MCF 10A (cell line): ENCODE measurements at regions of chr10 and their contacts with region 1.

Region 1: DNA sequence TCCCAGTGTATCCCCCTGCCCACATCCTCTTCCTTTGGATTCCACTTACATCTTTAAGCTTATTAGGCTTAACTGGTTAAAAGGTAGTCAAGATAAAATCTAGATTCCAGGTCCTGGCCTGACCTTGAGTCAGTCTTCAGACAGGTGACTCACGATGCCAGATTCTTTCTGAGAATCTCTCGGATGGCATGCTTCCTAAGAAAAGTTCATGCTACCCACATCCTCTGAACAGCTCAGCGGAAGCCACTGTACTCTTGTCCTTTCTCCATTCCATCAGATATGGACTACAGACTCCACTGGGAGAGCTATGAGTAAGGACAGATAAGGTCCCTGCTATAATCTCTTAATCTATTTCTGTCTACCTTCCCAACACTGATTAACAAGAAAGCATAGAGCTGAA is 43.4 kb downstream of the DNMBP start:
- DNase-seq: peak; percentile 78
- H3K4me3 Mint-ChIP-seq: no peak overlapping the region
- H3K27ac Mint-ChIP-seq: peak overlapping the region; percentile 49
- H3K4me1 Mint-ChIP-seq: peaks cover 12% of the 10 kb centered on the region
- H3K27me3 Mint-ChIP-seq: no peaks in the 10 kb centered on the region
- CTCF ChIP-seq: no peak

Region 2: DNA sequence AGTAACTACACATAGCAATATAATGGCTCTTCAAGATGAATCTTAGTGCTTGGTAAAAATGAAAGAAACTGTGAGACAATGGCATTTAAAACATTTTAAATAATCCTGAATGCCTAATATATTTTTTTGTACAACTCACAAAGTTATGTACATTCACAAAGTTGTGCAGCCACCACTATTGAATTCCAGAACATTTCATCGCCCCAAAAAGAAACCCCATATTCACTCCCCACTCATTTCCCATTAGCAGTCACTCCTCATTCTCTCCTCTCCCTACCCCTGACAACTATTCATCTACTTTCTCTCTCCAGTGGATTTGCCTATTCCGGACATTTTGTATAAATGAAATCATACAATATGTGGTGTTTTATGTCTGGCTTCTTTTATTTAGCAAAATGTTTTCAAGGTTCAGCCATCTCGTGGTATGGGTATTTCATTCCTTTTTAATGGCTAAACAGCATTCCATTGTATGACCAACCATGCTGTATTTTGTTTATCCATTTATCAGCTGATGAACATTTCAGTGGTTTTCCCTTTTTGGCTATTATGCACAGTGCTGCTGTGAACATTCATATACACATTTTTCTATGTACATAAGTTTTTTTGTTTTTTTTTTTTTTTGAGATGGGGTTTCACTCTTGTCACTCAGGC is 272.2 kb before region 1 on chr10:
- CTCF ChIA-PET with region 1: no interaction called
- POLR2A ChIA-PET with region 1: no interaction called
- intact Hi-C with region 1: no loop called
- DNase-seq: no peak
- H3K4me3 Mint-ChIP-seq: no peak overlapping the region
- H3K27ac Mint-ChIP-seq: no peak overlapping the region
- H3K4me1 Mint-ChIP-seq: peaks cover 6% of the 10 kb centered on the region
- H3K27me3 Mint-ChIP-seq: no peaks in the 10 kb centered on the region
- CTCF ChIP-seq: no peak

Region 3: GRCh38 chr10:99906470-99906869 is 59.8 kb before region 1 on chr10:
- CTCF ChIA-PET with region 1: interaction called, 5 read pairs
- POLR2A ChIA-PET with region 1: no interaction called
- intact Hi-C with region 1: loop called (anchors 1 kb)
- DNase-seq: peak; percentile 96
- H3K4me3 Mint-ChIP-seq: no peak overlapping the region
- H3K27ac Mint-ChIP-seq: peak overlapping the region; percentile 80
- H3K4me1 Mint-ChIP-seq: peaks cover 14% of the 10 kb centered on the region
- H3K27me3 Mint-ChIP-seq: no peaks in the 10 kb centered on the region
- CTCF ChIP-seq: peak; percentile 38

Region 4: GRCh38 chr10:99945263-99945662 is 21.0 kb before region 1 on chr10:
- CTCF ChIA-PET with region 1: no interaction called
- POLR2A ChIA-PET with region 1: interaction called, 10 read pairs
- intact Hi-C with region 1: no loop called
- DNase-seq: peak; percentile 58
- H3K4me3 Mint-ChIP-seq: no peak overlapping the region
- H3K27ac Mint-ChIP-seq: peak overlapping the region; percentile 52
- H3K4me1 Mint-ChIP-seq: peaks cover 16% of the 10 kb centered on the region
- H3K27me3 Mint-ChIP-seq: no peaks in the 10 kb centered on the region
- CTCF ChIP-seq: no peak

Region 5: GRCh38 chr10:99976886-99977665 is 10.8 kb after region 1 on chr10:
- CTCF ChIA-PET with region 1: interaction called, 18 read pairs
- POLR2A ChIA-PET with region 1: interaction called, 14 read pairs
- intact Hi-C with region 1: no loop called
- DNase-seq: peak; percentile 88
- H3K4me3 Mint-ChIP-seq: peak overlapping the region; percentile 67
- H3K27ac Mint-ChIP-seq: peak overlapping the region; percentile 100
- H3K4me1 Mint-ChIP-seq: peaks cover 24% of the 10 kb centered on the region
- H3K27me3 Mint-ChIP-seq: no peaks in the 10 kb centered on the region
- CTCF ChIP-seq: no peak

Region 6: DNA sequence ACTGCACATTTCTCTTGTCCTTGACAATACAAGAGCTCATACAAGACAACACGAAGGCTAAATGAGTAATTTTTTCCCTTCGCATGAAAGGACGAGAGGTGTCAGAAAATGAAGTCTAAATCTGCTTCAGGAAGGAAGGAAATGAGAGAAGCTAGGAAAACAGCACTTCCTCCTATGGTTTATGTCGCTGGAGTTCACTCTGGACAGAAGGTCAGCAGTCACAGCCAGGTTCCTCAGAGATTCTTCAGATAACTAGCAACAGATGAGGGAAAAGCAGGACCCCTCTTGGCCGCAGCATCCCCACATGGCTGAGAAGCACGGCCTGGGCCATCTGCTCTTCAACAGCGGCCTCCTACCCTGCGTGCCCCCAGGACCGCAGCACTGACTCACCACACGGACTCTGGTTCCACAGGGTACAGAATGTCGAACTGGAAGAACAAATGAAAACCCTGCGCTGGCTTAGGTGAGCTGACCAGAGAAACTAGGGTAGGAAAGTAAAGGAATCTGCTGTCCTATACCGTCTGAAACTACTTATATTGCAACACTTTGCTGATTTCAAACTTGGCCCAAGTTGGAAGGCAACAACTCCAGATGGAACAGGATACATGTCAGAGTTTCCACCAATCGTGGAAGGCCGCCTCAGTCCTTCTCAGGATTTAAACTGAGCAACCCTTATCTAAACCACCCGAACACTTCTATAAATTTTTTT is 17.1 kb after region 1 on chr10:
- CTCF ChIA-PET with region 1: interaction called, 13 read pairs
- POLR2A ChIA-PET with region 1: interaction called, 10 read pairs
- intact Hi-C with region 1: no loop called
- DNase-seq: no peak
- H3K4me3 Mint-ChIP-seq: no peak overlapping the region
- H3K27ac Mint-ChIP-seq: peak overlapping the region; percentile 85
- H3K4me1 Mint-ChIP-seq: peaks cover 23% of the 10 kb centered on the region
- H3K27me3 Mint-ChIP-seq: no peaks in the 10 kb centered on the region
- CTCF ChIP-seq: no peak

Region 7: DNA sequence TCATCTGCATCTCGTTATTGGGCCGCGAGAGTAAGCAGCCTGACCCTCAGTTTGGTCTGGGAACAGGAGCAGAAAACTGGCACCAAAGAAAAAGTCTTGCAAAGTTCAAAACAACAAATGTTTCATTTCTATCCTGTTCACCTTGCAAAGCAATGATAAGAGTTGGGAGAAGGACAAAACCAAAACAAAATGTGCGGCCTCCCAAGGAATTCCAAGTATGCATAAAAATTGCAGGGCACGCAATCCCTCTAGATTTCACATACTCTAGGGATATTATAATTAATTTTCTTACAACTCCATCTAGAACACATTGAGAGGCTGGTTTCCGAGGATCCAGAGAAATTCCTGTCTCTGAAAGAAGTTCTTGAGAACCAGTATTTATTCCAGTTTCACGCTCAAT is 243.0 kb after region 1 on chr10:
- CTCF ChIA-PET with region 1: no interaction called
- POLR2A ChIA-PET with region 1: no interaction called
- intact Hi-C with region 1: no loop called
- DNase-seq: no peak
- H3K4me3 Mint-ChIP-seq: no peak overlapping the region
- H3K27ac Mint-ChIP-seq: no peak overlapping the region
- H3K4me1 Mint-ChIP-seq: no peaks in the 10 kb centered on the region
- H3K27me3 Mint-ChIP-seq: no peaks in the 10 kb centered on the region
- CTCF ChIP-seq: no peak

Region 8: DNA sequence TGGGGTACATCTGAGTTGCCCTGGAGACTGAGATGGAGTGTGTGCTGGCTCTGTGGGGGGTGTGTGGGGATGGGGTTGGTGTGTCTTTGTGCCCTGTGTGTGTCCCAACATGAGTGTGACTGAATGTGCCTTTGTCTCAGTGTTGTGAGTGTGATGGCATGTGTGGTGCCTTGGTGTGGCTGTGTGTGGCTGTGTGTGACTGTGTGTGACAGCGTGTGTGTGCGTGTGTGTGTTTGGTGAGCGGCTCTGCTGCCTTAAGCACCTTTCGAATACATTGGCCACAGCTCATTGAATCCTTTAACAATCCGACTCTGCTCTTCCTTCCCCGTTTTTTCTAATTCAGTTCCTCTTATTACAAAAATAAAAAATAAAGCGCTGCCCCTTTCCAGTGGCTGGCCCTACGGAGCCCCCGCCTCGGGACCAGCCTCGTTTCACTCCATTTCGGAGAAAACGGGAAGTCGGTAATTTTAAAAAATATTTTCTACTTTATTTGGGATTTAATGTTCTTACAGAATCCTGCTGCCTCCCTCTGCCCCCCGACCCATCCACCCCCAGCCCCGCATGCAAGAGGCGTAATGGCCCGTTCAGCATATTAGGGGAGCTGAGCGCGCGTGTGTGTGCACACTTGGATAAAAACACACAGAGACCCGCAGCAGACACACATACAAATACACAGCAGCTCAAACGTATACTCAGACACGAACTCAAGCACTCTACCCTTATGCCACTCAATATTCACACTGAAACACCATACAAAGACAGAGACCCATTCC is 605.0 kb after region 1 on chr10:
- CTCF ChIA-PET with region 1: no interaction called
- POLR2A ChIA-PET with region 1: no interaction called
- intact Hi-C with region 1: no loop called
- DNase-seq: no peak
- H3K4me3 Mint-ChIP-seq: no peak overlapping the region
- H3K27ac Mint-ChIP-seq: no peak overlapping the region
- H3K4me1 Mint-ChIP-seq: peaks cover 7% of the 10 kb centered on the region
- H3K27me3 Mint-ChIP-seq: peaks cover 36% of the 10 kb centered on the region
- CTCF ChIP-seq: no peak